ENCODE measurements at regions of chr7 and their contacts with region 1.

Region 1: DNA sequence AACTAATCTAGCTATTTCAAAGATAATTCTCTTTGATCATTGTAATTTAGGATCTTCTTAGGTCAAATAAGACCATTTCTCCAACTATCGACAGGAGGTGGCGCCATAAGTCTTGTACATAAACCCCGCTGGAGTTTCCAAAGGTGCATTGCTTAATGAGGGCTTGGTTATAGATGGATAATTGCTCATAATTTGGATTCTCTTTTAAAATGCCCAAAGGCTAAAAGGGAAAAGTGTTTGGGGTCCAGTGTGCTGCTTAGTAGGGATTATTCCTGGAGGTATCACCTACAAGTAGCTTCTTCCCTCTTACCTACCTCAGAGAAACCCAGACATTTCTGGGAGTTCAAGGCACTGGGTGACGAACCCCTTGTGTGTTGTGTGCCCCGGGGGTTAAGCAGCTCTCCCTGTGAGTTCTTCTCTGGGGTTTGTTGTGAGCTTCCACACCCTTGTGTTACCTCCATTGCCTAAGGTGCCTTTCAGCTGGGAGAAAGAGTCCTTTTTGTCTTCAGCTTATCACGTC is 75.2 kb downstream of the PAXIP1 start:
- DNase-seq: peak; percentile 67 to 84 (median 71)
- H3K4me3 ChIP-seq: peak overlapping the region; percentile 85
- H3K4me3 Mint-ChIP-seq: peak overlapping the region; percentile 89 to 97 (median 95)
- H3K27ac ChIP-seq: peak overlapping the region; percentile 92
- H3K27ac Mint-ChIP-seq: peak overlapping the region; percentile 86 to 99 (median 98)
- H3K4me1 ChIP-seq: peaks cover 12% of the 10 kb centered on the region
- H3K4me1 Mint-ChIP-seq: peaks cover 29 to 40% (median 38%) of the 10 kb centered on the region in 3 donors
- H3K27me3 ChIP-seq: no peaks in the 10 kb centered on the region
- H3K27me3 Mint-ChIP-seq: peaks cover 2 to 6% of the 10 kb centered on the region in 2 donors

Region 2: GRCh38 chr7:154832557-154833138 is 95.0 kb before region 1 on chr7:
- CTCF ChIA-PET with region 1: no interaction called
- POLR2A ChIA-PET with region 1: no interaction called
- DNase-seq: no peak
- H3K4me3 ChIP-seq: no peak overlapping the region
- H3K4me3 Mint-ChIP-seq: no peak overlapping the region
- H3K27ac ChIP-seq: no peak overlapping the region
- H3K27ac Mint-ChIP-seq: no peak overlapping the region
- H3K4me1 ChIP-seq: no peaks in the 10 kb centered on the region
- H3K4me1 Mint-ChIP-seq: no peaks in the 10 kb centered on the region
- H3K27me3 ChIP-seq: no peaks in the 10 kb centered on the region
- H3K27me3 Mint-ChIP-seq: peaks cover 3 to 5% of the 10 kb centered on the region in 2 donors

Region 3: DNA sequence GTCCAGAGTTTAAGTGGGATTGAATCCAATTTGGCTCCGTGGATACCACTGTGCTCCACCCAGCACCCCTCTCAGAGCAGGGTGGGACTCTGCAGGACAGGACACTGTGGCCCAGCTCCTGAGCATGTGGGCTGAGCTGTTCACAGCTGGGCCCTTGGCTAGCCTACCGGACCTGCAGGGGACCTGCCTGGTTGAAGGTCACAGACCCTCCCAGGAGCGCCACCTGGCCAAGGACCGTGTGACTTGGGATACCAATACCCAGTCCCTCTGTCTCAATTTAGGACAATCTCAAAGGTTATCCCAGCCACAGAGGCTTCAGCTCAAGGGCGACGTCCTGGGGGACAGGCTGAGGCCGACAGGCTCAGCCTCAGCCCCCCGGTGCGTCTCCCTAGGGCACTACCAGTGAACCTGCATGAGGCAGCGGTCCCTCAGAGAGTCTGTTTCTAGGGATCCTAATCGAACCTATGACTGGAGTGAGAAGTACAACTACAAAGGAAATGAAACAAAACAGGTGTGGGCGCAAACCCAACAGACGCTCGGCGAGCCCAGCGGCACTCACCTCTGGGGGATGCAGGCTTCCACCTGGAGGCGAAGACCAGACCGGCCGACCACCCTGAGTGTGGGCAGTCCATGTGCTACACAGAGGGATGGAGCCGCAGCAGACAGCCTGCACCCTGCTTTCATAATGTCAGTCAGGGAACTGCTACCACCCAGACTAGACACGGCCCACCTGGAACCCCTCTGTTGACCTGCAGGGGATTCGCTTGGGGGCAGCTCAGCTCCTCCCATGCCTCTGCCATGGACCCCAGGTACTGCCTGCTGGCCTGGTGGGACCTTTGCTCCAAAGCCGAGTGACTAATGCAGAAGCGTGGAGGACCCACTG is 28.5 kb before region 1 on chr7:
- CTCF ChIA-PET with region 1: no interaction called
- POLR2A ChIA-PET with region 1: no interaction called
- DNase-seq: peak in 1 of 5 donors; percentile 35
- H3K4me3 ChIP-seq: no peak overlapping the region
- H3K4me3 Mint-ChIP-seq: no peak overlapping the region
- H3K27ac ChIP-seq: no peak overlapping the region
- H3K27ac Mint-ChIP-seq: no peak overlapping the region
- H3K4me1 ChIP-seq: no peaks in the 10 kb centered on the region
- H3K4me1 Mint-ChIP-seq: no peaks in the 10 kb centered on the region
- H3K27me3 ChIP-seq: no peaks in the 10 kb centered on the region
- H3K27me3 Mint-ChIP-seq: peaks cover 13 to 14% of the 10 kb centered on the region in 2 donors

Region 4: DNA sequence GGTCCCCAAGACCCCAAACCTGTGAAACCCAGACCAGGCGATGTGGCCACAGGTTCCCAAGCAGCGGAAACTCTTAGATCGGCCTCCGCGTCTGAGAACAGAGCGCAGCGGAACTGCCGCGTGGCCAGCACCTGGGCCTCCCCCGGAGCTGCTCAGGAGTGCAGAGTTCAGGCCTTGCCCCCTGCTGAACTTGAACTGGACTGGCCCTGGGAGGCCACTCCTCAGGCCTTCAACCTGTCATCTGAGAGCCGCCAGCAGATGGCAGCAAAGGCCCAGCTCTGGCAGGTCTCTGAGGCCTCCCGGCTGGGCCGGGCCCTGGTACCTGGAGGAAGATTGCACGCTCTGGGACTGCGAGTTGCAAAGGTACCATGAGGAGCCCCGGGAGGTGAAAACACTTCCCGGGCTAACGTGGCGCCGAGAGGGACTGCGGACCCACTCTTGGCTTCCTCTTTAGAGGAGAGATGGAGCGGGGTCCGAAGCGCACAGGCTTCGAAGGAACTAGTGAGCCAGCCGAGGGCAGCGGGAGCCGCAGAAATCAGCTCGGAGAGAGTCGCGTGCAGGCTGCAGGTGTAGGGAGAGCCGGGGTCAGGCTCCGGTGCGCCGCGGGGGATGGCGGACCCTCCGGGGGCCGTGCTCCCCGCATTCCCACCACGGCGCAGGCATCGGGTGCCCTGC is 13.9 kb before region 1 on chr7:
- CTCF ChIA-PET with region 1: interaction called, 62 read pairs
- POLR2A ChIA-PET with region 1: no interaction called
- DNase-seq: peak; percentile 76 to 89 (median 82)
- H3K4me3 ChIP-seq: peak overlapping the region; percentile 52
- H3K4me3 Mint-ChIP-seq: peak overlapping the region; percentile 67 to 94 (median 88)
- H3K27ac ChIP-seq: no peak overlapping the region
- H3K27ac Mint-ChIP-seq: peak overlapping the region in 3 of 8 donors; percentile 81 to 98 (median 87)
- H3K4me1 ChIP-seq: no peaks in the 10 kb centered on the region
- H3K4me1 Mint-ChIP-seq: peaks cover 3 to 8% (median 5%) of the 10 kb centered on the region in 3 donors
- H3K27me3 ChIP-seq: peaks cover 4% of the 10 kb centered on the region
- H3K27me3 Mint-ChIP-seq: peaks cover 18 to 35% of the 10 kb centered on the region in 2 donors

Region 5: DNA sequence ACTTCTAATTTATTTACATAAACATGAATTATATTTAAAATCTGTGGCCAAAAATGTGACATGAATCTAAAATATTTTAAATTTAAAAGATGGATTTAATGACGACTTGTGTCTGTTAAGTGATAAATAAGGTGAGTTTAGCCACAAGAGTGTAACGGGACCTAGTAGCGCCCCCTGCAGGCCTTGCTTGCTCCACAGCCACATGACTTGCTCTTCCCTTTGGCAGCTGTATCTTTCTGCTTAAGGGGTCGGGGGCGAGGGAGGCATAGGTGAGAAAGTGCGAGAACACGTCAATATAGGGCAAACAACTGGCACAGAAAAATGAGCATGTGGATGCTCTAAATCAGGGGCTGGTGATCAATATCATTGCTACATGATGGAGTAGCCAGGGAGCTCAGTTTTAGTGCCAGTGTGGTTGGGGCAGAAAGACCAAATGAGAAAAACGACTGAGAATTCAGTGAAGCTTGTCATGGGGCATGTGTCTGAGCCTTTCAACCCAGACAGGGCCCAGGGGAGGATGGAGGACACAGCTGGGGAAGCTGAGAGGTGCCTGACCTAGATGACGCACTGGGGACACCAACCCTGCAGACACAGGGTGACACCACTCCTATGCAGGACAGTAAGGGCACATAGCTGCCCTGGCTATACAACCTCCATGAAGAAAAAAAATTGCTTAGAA is 25.5 kb after region 1 on chr7:
- CTCF ChIA-PET with region 1: interaction called, 14 read pairs
- POLR2A ChIA-PET with region 1: no interaction called
- DNase-seq: peak; percentile 41 to 76 (median 60)
- H3K4me3 ChIP-seq: no peak overlapping the region
- H3K4me3 Mint-ChIP-seq: no peak overlapping the region
- H3K27ac ChIP-seq: no peak overlapping the region
- H3K27ac Mint-ChIP-seq: peak overlapping the region in 2 of 8 donors; percentile 34 to 81
- H3K4me1 ChIP-seq: no peaks in the 10 kb centered on the region
- H3K4me1 Mint-ChIP-seq: peaks cover 0 to 2% (median 0%) of the 10 kb centered on the region in 3 donors
- H3K27me3 ChIP-seq: no peaks in the 10 kb centered on the region
- H3K27me3 Mint-ChIP-seq: no peaks in the 10 kb centered on the region

Region 6: DNA sequence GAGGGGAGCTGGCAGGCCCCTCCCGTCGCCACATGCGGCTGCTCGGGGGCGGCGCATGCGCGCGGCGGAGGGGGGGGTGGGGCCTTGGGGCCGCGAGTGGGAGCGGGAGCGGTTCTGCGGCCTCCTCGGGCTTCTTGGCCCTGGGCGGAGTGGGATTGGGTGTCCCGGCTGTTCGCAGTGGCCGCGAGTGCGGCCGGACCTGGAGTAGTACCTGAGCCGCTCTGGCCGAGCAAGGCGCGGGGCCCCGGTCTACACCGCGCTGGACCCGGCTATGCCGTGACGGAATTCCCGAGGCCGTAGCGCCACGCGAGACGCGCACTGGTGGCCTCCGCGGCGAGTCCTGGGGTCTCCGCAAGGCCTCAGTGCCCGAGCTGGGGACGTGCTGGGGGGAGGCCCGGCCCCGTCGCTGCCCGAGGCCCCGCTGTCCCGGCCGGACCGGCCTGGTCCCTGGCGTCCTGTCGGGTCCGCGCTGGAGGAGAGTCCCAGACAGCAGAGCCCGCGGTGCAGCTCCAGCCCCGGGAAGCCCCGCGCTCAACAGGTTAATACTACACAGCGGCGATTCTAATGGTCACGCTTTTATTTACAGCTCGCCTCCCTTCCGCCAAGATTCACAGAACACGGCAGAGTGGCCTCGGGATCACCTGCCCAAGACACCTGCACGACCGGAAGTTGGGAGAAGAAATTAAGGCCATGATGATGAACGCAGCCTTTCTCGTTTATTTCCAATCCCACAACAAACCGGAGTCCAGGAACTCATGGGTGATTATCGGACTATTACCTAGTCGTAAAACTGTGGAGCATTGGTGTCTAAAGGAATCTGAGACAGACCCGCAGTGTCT is 75.9 kb after region 1 on chr7:
- CTCF ChIA-PET with region 1: interaction called, 31 read pairs
- POLR2A ChIA-PET with region 1: interaction called, 9 read pairs
- DNase-seq: peak; percentile 81 to 90 (median 85)
- H3K4me3 ChIP-seq: peak overlapping the region; percentile 59
- H3K4me3 Mint-ChIP-seq: peak overlapping the region; percentile 94 to 99 (median 96)
- H3K27ac ChIP-seq: peak overlapping the region; percentile 79
- H3K27ac Mint-ChIP-seq: peak overlapping the region; percentile 85 to 98 (median 95)
- H3K4me1 ChIP-seq: peaks cover 16% of the 10 kb centered on the region
- H3K4me1 Mint-ChIP-seq: peaks cover 8 to 22% (median 16%) of the 10 kb centered on the region in 3 donors
- H3K27me3 ChIP-seq: no peaks in the 10 kb centered on the region
- H3K27me3 Mint-ChIP-seq: peaks cover 0 to 3% of the 10 kb centered on the region in 2 donors

Region 7: GRCh38 chr7:155009570-155010157 is 82.0 kb after region 1 on chr7:
- CTCF ChIA-PET with region 1: interaction called, 31 read pairs
- POLR2A ChIA-PET with region 1: interaction called, 3 read pairs
- DNase-seq: peak in 1 of 5 donors; percentile 13
- H3K4me3 ChIP-seq: no peak overlapping the region
- H3K4me3 Mint-ChIP-seq: peak overlapping the region in 1 of 7 donors; percentile 14
- H3K27ac ChIP-seq: no peak overlapping the region
- H3K27ac Mint-ChIP-seq: peak overlapping the region in 2 of 8 donors; percentile 1 to 40
- H3K4me1 ChIP-seq: peaks cover 2% of the 10 kb centered on the region
- H3K4me1 Mint-ChIP-seq: peaks cover 3 to 9% (median 7%) of the 10 kb centered on the region in 3 donors
- H3K27me3 ChIP-seq: no peaks in the 10 kb centered on the region
- H3K27me3 Mint-ChIP-seq: peaks cover 0 to 1% of the 10 kb centered on the region in 2 donors

Region 8: GRCh38 chr7:155020996-155021395 is 93.3 kb after region 1 on chr7:
- CTCF ChIA-PET with region 1: no interaction called
- POLR2A ChIA-PET with region 1: no interaction called
- DNase-seq: no peak
- H3K4me3 ChIP-seq: no peak overlapping the region
- H3K4me3 Mint-ChIP-seq: no peak overlapping the region
- H3K27ac ChIP-seq: no peak overlapping the region
- H3K27ac Mint-ChIP-seq: no peak overlapping the region
- H3K4me1 ChIP-seq: no peaks in the 10 kb centered on the region
- H3K4me1 Mint-ChIP-seq: no peaks in the 10 kb centered on the region
- H3K27me3 ChIP-seq: no peaks in the 10 kb centered on the region
- H3K27me3 Mint-ChIP-seq: peaks cover 7 to 15% of the 10 kb centered on the region in 2 donors

Region 9: GRCh38 chr7:155252444-155252887 is 324.8 kb after region 1 on chr7:
- CTCF ChIA-PET with region 1: no interaction called
- POLR2A ChIA-PET with region 1: no interaction called
- DNase-seq: no peak
- H3K4me3 ChIP-seq: no peak overlapping the region
- H3K4me3 Mint-ChIP-seq: no peak overlapping the region
- H3K27ac ChIP-seq: no peak overlapping the region
- H3K27ac Mint-ChIP-seq: no peak overlapping the region
- H3K4me1 ChIP-seq: no peaks in the 10 kb centered on the region
- H3K4me1 Mint-ChIP-seq: no peaks in the 10 kb centered on the region
- H3K27me3 ChIP-seq: peaks cover 5% of the 10 kb centered on the region
- H3K27me3 Mint-ChIP-seq: peaks cover 8 to 23% of the 10 kb centered on the region in 2 donors

Region 10: DNA sequence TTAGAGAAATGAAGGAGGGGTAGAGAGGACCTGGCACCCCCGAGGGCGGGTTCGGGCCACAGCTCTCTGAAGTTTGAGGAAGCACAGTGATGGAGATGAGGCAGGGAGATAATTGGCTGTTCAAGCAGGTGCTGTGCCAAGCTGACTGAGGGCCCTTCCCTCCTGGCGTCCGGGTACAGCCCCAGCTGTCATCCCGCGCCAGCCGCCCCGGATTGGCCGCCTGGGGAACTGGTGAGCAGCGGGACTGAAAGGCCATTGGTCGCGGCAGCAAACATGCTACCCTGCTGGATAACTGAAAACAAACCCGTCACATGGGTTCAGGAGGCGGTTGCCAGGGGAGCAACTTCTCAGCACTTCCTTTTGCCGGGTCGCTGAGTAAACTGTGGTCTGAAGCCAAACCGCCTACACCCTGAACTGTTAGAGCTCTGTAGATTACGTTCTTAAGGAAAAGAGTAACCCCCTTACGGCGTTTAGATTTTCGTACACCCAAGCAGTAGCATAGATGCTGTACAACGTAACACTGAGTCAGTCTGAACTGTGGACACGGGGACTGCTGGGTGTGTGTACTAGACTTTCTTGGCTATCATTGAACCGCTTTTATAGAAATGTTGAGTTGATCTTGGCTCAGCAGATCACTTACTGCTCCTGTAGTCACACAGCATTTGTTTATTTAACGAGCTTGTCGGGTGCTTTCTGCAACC is 371.3 kb after region 1 on chr7:
- CTCF ChIA-PET with region 1: interaction called, 29 read pairs
- POLR2A ChIA-PET with region 1: interaction called, 14 read pairs
- DNase-seq: peak; percentile 92 to 98 (median 97)
- H3K4me3 ChIP-seq: peak overlapping the region; percentile 67
- H3K4me3 Mint-ChIP-seq: peak overlapping the region; percentile 88 to 97 (median 92)
- H3K27ac ChIP-seq: peak overlapping the region; percentile 92
- H3K27ac Mint-ChIP-seq: peak overlapping the region; percentile 96 to 100 (median 97)
- H3K4me1 ChIP-seq: peaks cover 38% of the 10 kb centered on the region
- H3K4me1 Mint-ChIP-seq: peaks cover 35 to 52% (median 39%) of the 10 kb centered on the region in 3 donors
- H3K27me3 ChIP-seq: no peaks in the 10 kb centered on the region
- H3K27me3 Mint-ChIP-seq: no peaks in the 10 kb centered on the region